WTC11 (cell line): ENCODE measurements at regions of chr14 and their contacts with region 1.

Region 1: GRCh38 chr14:93655078-93655750 is 133.1 kb downstream of the PRIMA1 start:
- DNase-seq: peak; percentile 17
- ATAC-seq: peak; percentile 80
- H3K4me3 Mint-ChIP-seq: no peak overlapping the region
- H3K27ac Mint-ChIP-seq: peak overlapping the region; percentile 75; the same call in 1 of the 2 replicates
- H3K4me1 Mint-ChIP-seq: peaks cover 14% of the 10 kb centered on the region
- H3K27me3 Mint-ChIP-seq: no peaks in the 10 kb centered on the region
- CTCF ChIP-seq: peak; percentile 51

Region 2: GRCh38 chr14:93566065-93566693 is 89.0 kb before region 1 on chr14:
- CTCF ChIA-PET with region 1: no interaction called
- POLR2A ChIA-PET with region 1: no interaction called
- DNase-seq: no peak
- ATAC-seq: peak; percentile 60
- H3K4me3 Mint-ChIP-seq: no peak overlapping the region
- H3K27ac Mint-ChIP-seq: no peak overlapping the region
- H3K4me1 Mint-ChIP-seq: peaks cover 32% of the 10 kb centered on the region
- H3K27me3 Mint-ChIP-seq: no peaks in the 10 kb centered on the region
- CTCF ChIP-seq: no peak

Region 3: GRCh38 chr14:93688239-93688666 is 33.0 kb after region 1 on chr14:
- CTCF ChIA-PET with region 1: interaction called, 52 read pairs
- POLR2A ChIA-PET with region 1: no interaction called
- DNase-seq: peak; percentile 74
- ATAC-seq: peak; percentile 83
- H3K4me3 Mint-ChIP-seq: peak overlapping the region; percentile 50
- H3K27ac Mint-ChIP-seq: peak overlapping the region; percentile 90
- H3K4me1 Mint-ChIP-seq: peaks cover 76% of the 10 kb centered on the region
- H3K27me3 Mint-ChIP-seq: 0 out of 2 replicates have a peak, but pooled peaks cover 2% of the 10 kb centered on the region
- CTCF ChIP-seq: no peak

Region 4: DNA sequence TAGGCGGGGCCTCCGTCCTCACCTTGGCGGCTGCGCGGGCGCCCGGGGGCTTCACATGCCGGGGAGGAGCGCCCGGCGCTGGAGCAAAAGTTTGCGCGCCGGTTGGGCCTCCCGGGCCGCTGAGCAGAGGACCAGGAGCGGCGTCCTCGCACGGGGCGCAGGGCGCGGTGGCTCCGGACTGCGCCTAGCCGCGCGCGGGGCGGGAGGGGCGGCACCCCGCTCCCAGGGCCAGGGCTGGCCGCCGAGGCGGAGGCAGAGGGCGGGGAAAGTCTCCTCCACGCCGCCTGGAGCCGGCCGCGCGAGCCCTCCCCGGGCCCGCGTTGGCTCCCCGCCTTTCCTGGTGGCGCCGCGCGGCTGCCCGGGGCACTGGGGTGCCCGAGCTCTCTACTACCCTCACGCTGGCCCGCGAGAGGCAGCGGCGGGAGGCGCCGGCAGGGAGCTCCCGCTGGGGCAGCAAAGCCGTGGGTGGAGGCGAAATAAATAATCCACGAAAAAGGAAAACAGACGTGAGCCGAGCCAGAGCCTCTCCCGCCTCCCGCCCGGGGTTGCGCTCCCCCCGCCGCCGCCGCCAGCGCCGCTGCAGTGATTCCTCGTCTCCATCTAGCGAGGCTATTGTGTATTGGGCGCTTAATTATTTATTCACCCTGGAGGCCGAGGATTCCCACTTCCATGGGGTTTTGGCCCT is 133.5 kb after region 1 on chr14:
- CTCF ChIA-PET with region 1: interaction called, 23 read pairs
- POLR2A ChIA-PET with region 1: no interaction called
- DNase-seq: peak; percentile 69
- ATAC-seq: peak; percentile 60
- H3K4me3 Mint-ChIP-seq: peak overlapping the region; percentile 89
- H3K27ac Mint-ChIP-seq: no peak overlapping the region
- H3K4me1 Mint-ChIP-seq: peaks cover 16% of the 10 kb centered on the region
- H3K27me3 Mint-ChIP-seq: peaks cover 52% of the 10 kb centered on the region
- CTCF ChIP-seq: no peak

Region 5: DNA sequence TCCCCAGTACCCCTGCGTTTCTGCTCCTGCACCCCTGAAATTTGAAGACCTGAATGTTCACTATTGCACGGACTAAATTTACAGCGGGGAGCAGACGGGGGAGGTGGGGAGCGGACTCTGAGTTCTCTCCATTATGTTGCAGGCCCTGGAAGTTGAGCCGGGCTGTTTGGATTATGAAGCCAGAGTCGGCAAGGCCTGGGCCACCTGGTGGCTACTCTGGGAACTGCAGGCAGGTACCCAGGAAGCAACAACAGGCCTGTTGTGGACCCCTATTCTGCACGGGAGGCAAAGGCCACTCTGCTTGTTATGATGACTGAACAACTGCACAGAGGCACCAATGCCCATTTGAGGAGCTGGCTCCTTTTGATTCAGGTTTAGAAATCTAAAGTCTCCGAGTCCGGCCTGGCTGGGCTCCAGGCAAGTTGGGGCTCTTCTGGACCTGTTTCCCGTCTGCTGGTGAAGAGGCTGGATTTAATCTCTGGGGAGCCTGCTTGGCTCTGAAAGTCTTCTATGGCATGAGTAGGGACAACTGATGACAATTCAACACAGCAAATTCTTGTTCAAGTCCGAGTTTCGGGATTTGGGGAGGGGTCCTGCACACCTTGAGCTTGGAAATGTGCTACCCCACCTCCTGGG is 237.8 kb after region 1 on chr14:
- CTCF ChIA-PET with region 1: interaction called, 22 read pairs
- POLR2A ChIA-PET with region 1: no interaction called
- DNase-seq: peak; percentile 93
- ATAC-seq: peak; percentile 68
- H3K4me3 Mint-ChIP-seq: no peak overlapping the region
- H3K27ac Mint-ChIP-seq: no peak overlapping the region
- H3K4me1 Mint-ChIP-seq: peaks cover 43% of the 10 kb centered on the region
- H3K27me3 Mint-ChIP-seq: peaks cover 3% of the 10 kb centered on the region
- CTCF ChIP-seq: peak; percentile 100